Caco-2 (cell line): ENCODE measurements at regions of chr17 and their contacts with region 1.

Region 1: GRCh38 chr17:7561028-7561575 is 617 bp upstream of the SENP3 start:
- DNase-seq: peak; percentile 81 to 85
- H3K4me3 ChIP-seq: peak overlapping the region; percentile 60
- H3K4me3 Mint-ChIP-seq: peak overlapping the region; percentile 86
- H3K27ac Mint-ChIP-seq: peak overlapping the region; percentile 75
- H3K4me1 ChIP-seq: peaks cover 4% of the 10 kb centered on the region; the same call in 1 of the 2 replicates
- H3K4me1 Mint-ChIP-seq: no peaks in the 10 kb centered on the region
- H3K27me3 ChIP-seq: no peaks in the 10 kb centered on the region
- H3K27me3 Mint-ChIP-seq: no peaks in the 10 kb centered on the region
- CTCF ChIP-seq: peak; percentile 64 to 78

Region 2: DNA sequence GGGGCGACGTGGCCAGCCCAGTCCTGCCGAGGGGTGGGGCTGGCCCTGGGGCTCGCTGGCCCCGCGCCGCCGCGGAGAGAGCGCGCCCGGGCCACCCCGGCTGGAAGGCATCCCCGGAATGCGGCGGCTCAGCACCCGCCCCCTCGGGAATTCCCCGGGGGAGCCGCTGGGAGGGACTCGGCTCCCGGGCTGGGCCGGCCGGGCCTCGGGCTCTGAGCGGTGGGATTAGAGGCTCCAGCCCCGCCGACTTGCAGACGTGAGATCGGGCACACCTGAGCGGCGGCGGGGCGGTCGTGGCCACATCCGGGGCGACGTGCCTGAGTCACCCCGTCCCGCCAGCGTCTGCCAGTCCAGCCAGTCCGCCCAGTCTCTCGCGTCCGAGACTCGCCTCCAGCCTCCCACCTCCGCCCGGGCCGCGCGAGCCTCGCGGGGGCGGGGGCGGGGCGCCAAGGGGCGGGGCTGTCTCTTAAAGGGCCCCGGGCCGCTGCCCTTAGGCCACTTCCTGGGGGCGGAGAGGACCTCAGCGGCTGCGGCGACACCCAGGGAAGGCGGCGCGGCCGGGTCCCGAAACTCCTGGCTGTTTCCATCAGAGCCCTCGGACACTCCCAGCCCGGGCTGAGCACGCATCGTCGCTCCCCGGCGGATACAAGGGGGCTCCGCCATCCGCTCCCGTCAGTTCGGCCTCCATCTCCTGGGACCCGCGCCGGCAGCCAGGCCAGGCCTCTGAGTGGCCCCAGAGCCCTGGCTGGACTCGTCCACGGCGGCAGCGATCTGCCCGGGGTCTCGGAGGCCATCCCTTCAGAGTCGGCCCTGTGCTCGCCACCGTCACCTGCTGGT is 209.2 kb before region 1 on chr17 and contains the start of gene KCTD11:
- CTCF ChIA-PET with region 1: interaction called, 7 read pairs
- POLR2A ChIA-PET with region 1: no interaction called
- intact Hi-C with region 1: loop called (anchors 2 kb)
- DNase-seq: peak; percentile 88 to 90
- H3K4me3 ChIP-seq: peak within 1 kb of the TSS; percentile 63
- H3K4me3 Mint-ChIP-seq: peak within 1 kb of the TSS; percentile 83
- H3K27ac Mint-ChIP-seq: peak within 1 kb of the TSS; percentile 88
- H3K4me1 ChIP-seq: peaks cover 3% of the 10 kb centered on the region; the same call in 1 of the 2 replicates
- H3K4me1 Mint-ChIP-seq: peaks cover 11% of the 10 kb centered on the region
- H3K27me3 ChIP-seq: no peaks in the 10 kb centered on the region
- H3K27me3 Mint-ChIP-seq: no peaks in the 10 kb centered on the region
- CTCF ChIP-seq: peak in 1 of 2 experiments; percentile 37
- total RNA-seq, gene KCTD11: 5.1 and 5.4 TPM in 2 replicates

Region 3: DNA sequence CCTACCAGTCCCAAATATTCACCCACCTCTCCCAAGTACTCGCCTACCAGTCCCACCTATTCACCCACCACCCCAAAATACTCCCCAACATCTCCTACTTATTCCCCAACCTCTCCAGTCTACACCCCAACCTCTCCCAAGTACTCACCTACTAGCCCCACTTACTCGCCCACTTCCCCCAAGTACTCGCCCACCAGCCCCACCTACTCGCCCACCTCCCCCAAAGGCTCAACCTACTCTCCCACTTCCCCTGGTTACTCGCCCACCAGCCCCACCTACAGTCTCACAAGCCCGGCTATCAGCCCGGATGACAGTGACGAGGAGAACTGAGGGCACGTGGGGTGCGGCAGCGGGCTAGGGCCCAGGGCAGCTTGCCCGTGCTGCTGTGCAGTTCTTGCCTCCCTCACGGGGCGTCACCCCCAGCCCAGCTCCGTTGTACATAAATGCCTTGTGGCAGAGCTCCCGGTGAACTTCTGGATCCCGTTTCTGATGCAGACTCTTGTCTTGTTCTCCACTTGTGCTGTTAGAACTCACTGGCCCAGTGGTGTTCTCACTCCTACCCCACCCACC is 47.2 kb before region 1 on chr17:
- CTCF ChIA-PET with region 1: interaction called, 5 read pairs
- POLR2A ChIA-PET with region 1: interaction called, 3 read pairs
- intact Hi-C with region 1: loop called (anchors 1 kb)
- DNase-seq: no peak
- H3K4me3 ChIP-seq: no peak overlapping the region
- H3K4me3 Mint-ChIP-seq: no peak overlapping the region
- H3K27ac Mint-ChIP-seq: no peak overlapping the region
- H3K4me1 ChIP-seq: no peaks in the 10 kb centered on the region
- H3K4me1 Mint-ChIP-seq: no peaks in the 10 kb centered on the region
- H3K27me3 ChIP-seq: no peaks in the 10 kb centered on the region
- H3K27me3 Mint-ChIP-seq: no peaks in the 10 kb centered on the region
- CTCF ChIP-seq: no peak

Region 4: DNA sequence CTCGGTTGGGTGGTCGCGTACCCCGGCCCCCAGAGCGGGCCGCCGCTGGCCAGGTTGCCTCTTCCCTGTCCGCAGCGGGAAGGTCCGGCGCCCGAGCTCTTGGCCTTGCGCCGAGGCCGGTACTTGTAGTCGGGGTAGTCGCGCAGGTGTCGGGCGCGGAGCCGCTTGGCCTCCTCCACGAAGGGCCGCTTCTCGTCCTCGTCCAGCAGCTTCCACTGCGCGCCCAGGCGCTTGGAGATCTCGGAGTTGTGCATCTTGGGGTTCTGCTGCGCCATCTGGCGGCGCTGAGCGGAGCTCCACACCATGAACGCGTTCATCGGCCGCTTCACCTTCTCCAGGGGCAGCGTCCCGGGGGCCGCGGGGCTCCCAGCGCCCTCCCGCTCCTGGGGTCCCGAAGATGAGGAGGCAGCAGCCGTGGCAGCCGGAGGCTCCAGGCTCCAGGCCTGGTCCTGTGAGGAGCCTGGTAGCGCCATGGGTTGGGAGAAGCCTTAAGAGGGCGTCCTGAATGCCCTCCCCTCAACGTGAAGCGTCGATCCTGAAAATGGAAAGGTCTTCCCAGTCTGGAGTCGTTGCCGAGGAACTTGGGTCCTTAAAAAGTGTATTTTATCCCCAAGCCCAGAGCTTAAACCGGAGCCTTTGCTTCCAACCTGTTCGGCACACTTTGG is 28.2 kb after region 1 on chr17:
- CTCF ChIA-PET with region 1: no interaction called
- POLR2A ChIA-PET with region 1: no interaction called
- intact Hi-C with region 1: no loop called
- DNase-seq: no peak
- H3K4me3 ChIP-seq: no peak overlapping the region
- H3K4me3 Mint-ChIP-seq: no peak overlapping the region
- H3K27ac Mint-ChIP-seq: no peak overlapping the region
- H3K4me1 ChIP-seq: no peaks in the 10 kb centered on the region
- H3K4me1 Mint-ChIP-seq: peaks cover 4% of the 10 kb centered on the region
- H3K27me3 ChIP-seq: no peaks in the 10 kb centered on the region
- H3K27me3 Mint-ChIP-seq: no peaks in the 10 kb centered on the region
- CTCF ChIP-seq: no peak